Right ventricle myocardium inferior (tissue), 1 donor: ENCODE measurements at regions of chr10 and their contacts with region 1.

Region 1: DNA sequence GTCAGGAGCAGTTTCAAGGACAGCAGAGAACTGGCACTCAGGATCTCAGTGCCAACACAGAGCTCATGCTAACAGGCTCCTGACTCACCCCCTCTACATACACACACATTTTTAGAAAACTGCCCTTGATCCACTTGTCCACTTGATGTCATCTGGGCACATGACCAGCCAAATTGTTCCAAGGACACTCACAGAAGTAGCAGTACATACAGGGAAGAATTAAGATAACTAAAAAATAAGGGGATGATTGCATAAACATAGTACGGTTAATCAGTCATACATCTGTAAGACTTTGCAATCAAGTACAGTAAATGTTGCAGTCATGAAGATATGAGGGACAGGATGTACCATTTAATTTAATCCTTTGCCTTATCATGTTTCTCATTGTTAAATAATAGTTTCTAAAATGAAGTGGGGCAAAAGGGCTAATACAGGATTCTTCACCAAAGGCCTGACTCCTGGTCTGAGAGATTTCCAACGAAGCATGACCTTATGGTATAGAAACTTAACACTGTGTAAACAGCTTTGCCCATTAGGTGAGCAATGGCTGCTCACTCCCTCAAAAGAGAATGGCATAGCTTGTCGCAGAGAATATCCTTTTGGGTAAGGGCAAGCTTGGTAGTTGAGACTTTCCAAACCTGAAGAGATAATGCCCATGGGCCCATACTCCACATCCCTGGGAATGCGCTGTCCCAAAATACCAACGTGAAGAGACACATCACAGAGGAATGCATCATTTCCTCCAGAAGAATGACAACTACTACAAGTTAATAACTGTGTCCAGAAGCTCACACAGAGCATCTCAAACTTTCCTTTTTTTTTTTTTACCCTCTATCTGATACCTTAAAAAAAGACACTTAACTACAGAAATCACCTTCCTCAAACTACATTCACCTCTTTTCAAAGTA is 94.1 kb downstream of the ARMH3 start:
- DNase-seq: no peak
- ATAC-seq: peak; percentile 83

Region 2: GRCh38 chr10:101938316-101939281 is 23.2 kb before region 1 on chr10:
- intact Hi-C with region 1: loop called (anchors 1 kb)
- DNase-seq: no peak
- ATAC-seq: no peak